ENCODE measurements at regions of chr1 and their contacts with region 1.

Region 1: DNA sequence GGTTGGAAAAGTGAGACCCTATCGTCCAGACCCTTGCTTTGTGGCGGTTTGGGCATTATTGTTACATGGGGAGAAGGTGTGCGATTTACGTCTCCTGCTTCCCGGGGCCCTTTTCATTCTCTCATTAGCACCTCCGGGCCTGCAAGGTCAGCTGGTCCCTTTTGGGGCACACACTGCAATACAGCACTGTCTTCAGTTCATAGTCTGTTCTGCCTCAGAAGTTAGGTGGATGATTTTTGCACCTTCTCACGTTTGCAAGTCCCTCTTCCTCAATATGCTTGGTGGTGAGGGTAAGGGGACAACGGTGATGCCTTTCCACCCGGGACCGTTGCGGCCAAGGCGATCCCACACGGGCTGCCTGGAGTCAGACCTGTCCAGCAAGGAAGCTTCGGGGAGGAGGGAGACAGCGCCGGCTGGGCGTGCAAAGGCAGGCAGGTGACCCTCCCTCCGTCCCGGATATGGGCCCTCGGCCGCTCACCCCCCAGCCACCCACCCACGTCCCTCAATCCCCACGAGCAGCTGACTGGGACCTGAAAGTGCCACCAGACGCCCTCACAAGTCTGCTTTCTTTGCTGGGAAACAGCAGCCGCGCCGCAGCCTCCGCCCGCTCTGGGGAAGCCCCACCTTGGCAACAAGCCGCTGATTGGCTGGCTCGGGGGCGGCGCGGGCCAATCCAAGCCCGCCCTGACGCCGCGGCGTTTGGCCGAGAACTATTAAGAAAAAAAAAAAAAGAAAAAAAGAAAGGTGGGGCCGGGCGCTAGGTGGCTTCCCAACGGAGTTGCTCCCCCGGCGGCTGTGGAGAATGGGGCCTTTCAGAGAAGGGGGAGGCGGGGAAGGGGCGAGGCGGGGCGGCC is 21.7 kb downstream of the BTG2 start:
- DNase-seq: peak; percentile 95
- CTCF ChIP-seq: peak; percentile 1

Region 2: GRCh38 chr1:203290261-203291089 is 36.6 kb before region 1 on chr1:
- CTCF ChIA-PET with region 1: interaction called, 24 read pairs
- POLR2A ChIA-PET with region 1: interaction called, 13 read pairs
- DNase-seq: peak; percentile 91
- CTCF ChIP-seq: no peak

Region 3: DNA sequence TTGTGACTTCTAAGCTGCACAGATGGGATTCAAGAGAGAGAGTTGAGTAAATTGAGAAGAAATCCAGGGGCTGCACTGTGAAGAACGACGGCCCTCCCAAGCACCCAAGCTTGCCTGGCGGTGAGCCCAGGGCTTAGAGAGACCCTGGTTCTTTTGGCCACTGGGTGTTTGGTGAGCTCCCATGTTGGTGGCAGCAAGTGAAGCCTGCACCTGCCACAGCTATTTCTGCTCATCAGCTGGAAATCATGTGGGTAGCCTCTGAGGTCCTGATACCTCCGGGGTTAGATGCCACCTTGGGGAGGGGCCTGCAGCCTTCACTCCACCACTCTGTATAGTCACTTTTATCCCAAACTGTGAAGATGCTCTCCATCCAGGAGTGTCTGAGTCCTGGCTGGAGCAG is 27.9 kb before region 1 on chr1:
- CTCF ChIA-PET with region 1: interaction called, 21 read pairs
- POLR2A ChIA-PET with region 1: interaction called, 6 read pairs
- DNase-seq: no peak
- CTCF ChIP-seq: no peak

Region 4: GRCh38 chr1:203373002-203373401 is 45.9 kb after region 1 on chr1:
- CTCF ChIA-PET with region 1: no interaction called
- POLR2A ChIA-PET with region 1: no interaction called
- DNase-seq: no peak
- CTCF ChIP-seq: no peak